HepG2 (cell line): ENCODE measurements at regions of chr7 and their contacts with region 1.

Region 1: DNA sequence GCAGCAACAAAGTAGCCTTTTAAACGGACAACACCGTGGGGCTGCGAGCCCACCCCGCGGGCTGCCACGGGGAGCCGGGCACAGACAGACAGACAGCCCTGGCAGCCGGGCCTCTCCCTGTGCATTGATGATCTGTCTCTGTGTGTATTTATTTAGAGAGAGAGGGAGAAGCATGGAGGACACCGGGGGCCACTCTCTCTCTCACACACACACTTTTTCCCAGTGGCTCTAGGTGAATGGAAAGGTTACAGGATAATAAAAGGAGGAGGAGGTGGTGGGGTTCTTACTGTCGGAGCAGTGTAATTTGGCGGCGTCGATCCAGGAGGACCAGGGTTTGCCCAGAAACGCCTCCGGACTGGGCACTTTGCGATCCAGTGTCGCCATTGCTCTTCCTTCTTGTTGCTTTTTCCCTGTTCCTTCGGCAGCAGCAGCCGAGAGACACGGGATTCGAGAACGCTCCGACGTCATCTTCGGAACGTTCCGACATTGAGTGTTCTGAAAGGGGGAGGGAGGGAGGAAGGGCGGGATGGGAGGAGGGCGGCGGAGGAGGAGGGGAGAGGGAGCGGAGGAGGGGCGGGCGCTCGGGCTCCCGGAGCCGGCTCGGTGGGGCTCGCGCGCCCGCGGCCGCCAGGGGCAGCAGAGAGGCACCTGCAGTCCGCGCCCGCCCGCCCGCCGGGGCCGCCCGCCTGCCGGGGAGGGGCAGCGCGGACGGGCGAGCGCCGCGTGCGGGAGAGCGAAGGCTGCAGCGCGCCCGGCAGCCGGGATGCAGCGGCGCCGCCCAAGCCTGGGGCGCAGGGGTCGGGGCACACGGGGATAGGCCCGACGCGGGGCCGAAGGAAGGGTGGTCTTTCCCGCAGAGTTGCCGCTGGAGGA is at the start of gene ATXN7L1:
- DNase-seq: peak; percentile 92
- ATAC-seq: peak; percentile 89
- H3K4me3 ChIP-seq: peak within 1 kb of the TSS; percentile 77 to 90 (median 88)
- H3K27ac ChIP-seq: peak within 1 kb of the TSS; percentile 85
- H3K4me1 ChIP-seq: peaks cover 51% of the 10 kb centered on the region
- H3K27me3 ChIP-seq: no peaks in the 10 kb centered on the region; a peak in 1 of 5 replicates
- CTCF ChIP-seq: peak; percentile 43; the same call in 1 of the 2 replicates
- EP300 ChIP-seq: no peak
- POLR2A ChIP-seq: peak; percentile 69 to 70
- RAD21 ChIP-seq: peak; percentile 71; the same call in 1 of the 2 replicates
- total RNA-seq, gene ATXN7L1: 7.7 and 7.8 TPM in 2 replicates

Region 2: GRCh38 chr7:105652359-105652993 is 223.9 kb before region 1 on chr7:
- CTCF ChIA-PET with region 1: no interaction called
- POLR2A ChIA-PET with region 1: interaction called, 3 read pairs
- in situ Hi-C with region 1: no loop called
- intact Hi-C with region 1: loop called (anchors 2 kb)
- DNase-seq: peak; percentile 62
- ATAC-seq: peak; percentile 96
- H3K4me3 ChIP-seq: no peak overlapping the region
- H3K27ac ChIP-seq: no peak overlapping the region
- H3K4me1 ChIP-seq: peaks cover 46% of the 10 kb centered on the region
- H3K27me3 ChIP-seq: no peaks in the 10 kb centered on the region
- CTCF ChIP-seq: peak; percentile 94
- EP300 ChIP-seq: no peak
- POLR2A ChIP-seq: no peak
- RAD21 ChIP-seq: peak; percentile 90

Region 3: DNA sequence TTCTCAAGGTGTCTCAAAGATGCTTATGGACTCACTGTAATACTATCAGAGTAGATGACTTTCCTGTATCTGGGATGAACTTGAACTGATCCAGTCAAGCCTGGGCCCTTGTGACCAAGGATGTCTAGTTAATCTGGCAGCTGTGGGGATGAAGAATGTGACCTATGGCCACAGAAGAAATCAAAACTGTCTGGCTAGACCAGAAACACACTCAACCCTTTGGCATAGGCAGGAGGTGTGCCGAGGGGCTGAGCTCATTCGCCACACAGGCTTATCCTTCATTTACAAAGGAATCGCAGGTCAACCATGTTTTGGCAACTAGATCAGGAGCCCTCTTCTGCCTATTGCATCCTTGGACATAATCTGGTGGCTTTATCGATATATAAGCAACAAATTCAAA is 110.5 kb before region 1 on chr7:
- CTCF ChIA-PET with region 1: no interaction called
- POLR2A ChIA-PET with region 1: no interaction called
- in situ Hi-C with region 1: loop called (anchors 5 kb)
- intact Hi-C with region 1: loop called (anchors 2 kb)
- DNase-seq: no peak
- ATAC-seq: no peak
- H3K4me3 ChIP-seq: no peak overlapping the region
- H3K27ac ChIP-seq: no peak overlapping the region
- H3K4me1 ChIP-seq: peaks cover 7% of the 10 kb centered on the region; the same call in 1 of the 2 replicates
- H3K27me3 ChIP-seq: no peaks in the 10 kb centered on the region
- CTCF ChIP-seq: no peak
- EP300 ChIP-seq: no peak
- POLR2A ChIP-seq: no peak
- RAD21 ChIP-seq: no peak

Region 4: DNA sequence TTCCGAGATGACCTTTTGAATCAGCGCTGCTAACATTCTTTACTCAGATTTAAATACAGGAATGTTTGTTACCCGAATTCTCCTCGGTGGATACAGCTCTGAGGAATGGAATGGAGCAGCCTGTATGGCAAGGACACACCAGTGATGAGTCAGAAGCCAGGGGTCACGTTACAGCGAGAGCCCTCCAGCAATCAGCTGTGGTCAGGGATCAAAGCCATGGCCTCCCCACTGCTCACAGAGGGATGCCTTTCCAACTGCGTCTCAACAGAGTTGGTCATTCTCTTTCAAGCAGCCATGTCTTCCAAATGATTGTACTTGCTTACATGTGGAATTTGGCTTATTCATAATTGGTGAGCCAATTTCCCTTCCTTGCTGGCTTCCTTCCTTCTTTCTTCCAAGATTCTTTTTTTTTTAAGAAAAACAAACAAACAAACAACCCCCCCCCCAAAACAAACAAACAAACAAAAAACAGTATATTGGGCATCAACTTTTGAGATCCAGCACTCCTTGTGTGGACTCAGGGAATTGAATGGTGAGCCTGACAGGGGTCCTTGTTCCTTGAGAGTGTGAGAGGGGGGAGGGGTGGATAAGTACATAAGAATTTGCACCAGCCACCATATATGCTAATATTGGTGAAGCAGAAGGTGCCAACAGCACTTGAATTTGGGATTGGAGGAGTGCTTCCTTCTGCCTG is 100.1 kb before region 1 on chr7:
- CTCF ChIA-PET with region 1: no interaction called
- POLR2A ChIA-PET with region 1: no interaction called
- in situ Hi-C with region 1: no loop called
- intact Hi-C with region 1: loop called (anchors 1 kb)
- DNase-seq: peak; percentile 90
- ATAC-seq: peak; percentile 100
- H3K4me3 ChIP-seq: no peak overlapping the region
- H3K27ac ChIP-seq: no peak overlapping the region
- H3K4me1 ChIP-seq: peaks cover 14% of the 10 kb centered on the region
- H3K27me3 ChIP-seq: no peaks in the 10 kb centered on the region
- CTCF ChIP-seq: no peak
- EP300 ChIP-seq: peak in 1 of 2 experiments; percentile 38; a peak in 1 of 4 replicates
- POLR2A ChIP-seq: no peak
- RAD21 ChIP-seq: no peak

Region 5: GRCh38 chr7:105853931-105854419 is 22.4 kb before region 1 on chr7:
- CTCF ChIA-PET with region 1: no interaction called
- POLR2A ChIA-PET with region 1: no interaction called
- in situ Hi-C with region 1: no loop called
- intact Hi-C with region 1: no loop called
- DNase-seq: no peak
- ATAC-seq: no peak
- H3K4me3 ChIP-seq: no peak overlapping the region
- H3K27ac ChIP-seq: no peak overlapping the region
- H3K4me1 ChIP-seq: peaks cover 39% of the 10 kb centered on the region
- H3K27me3 ChIP-seq: no peaks in the 10 kb centered on the region
- CTCF ChIP-seq: no peak
- EP300 ChIP-seq: no peak
- POLR2A ChIP-seq: no peak
- RAD21 ChIP-seq: no peak

Region 6: DNA sequence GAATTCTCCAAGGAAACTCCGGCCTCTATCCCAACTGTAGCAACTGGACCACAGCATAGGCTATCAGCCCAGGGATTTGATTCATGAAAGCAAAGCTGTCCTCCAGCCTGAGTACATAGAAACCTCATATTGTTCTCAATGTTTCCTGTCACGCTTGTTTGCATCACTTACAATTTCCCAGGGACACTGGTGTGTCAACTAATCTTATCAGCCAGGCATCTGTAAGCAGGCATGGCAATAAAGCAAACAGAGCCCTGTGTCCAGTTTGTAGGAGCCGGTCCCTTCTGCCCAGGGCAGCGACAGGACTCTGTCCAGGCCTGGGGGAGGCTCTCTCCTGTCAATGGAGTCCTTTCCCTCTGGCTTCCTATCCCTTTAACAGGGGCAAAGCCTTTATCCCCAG is 63.8 kb after region 1 on chr7:
- CTCF ChIA-PET with region 1: no interaction called
- POLR2A ChIA-PET with region 1: no interaction called
- in situ Hi-C with region 1: no loop called
- intact Hi-C with region 1: loop called (anchors 5 kb)
- DNase-seq: peak; percentile 81
- ATAC-seq: peak; percentile 93
- H3K4me3 ChIP-seq: no peak overlapping the region
- H3K27ac ChIP-seq: no peak overlapping the region
- H3K4me1 ChIP-seq: peaks cover 20% of the 10 kb centered on the region
- H3K27me3 ChIP-seq: no peaks in the 10 kb centered on the region
- CTCF ChIP-seq: no peak
- EP300 ChIP-seq: no peak
- POLR2A ChIP-seq: no peak
- RAD21 ChIP-seq: no peak

Region 7: DNA sequence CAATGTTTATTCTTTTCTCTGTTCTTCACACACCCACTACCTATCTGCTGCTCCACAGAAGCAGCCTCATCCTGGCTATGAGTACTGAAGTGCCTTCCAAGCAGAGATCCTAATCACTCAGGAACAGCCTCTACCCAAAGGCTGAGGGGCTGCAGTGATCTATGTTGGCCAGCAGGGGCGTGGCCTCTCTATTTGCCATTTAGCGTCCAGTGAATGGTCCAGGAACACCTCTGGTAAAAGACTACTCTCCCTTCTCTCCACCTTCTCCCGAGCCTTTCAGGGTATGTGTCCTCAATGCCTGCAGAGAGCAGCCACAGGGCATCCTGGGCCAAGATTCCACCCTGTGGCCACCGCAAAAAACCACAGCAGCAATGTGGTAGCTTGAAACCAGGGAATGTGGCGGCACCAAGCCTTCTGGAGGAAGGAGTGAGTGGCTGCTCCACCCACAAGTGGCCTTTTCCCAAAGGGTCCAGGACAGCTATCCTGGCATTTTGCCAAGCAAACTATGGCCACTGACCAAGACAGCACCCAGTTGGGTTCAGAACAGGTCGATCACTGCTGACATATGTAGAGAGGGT is 164.9 kb after region 1 on chr7:
- CTCF ChIA-PET with region 1: no interaction called
- POLR2A ChIA-PET with region 1: no interaction called
- in situ Hi-C with region 1: no loop called
- intact Hi-C with region 1: loop called (anchors 2 kb)
- DNase-seq: peak; percentile 50
- ATAC-seq: peak; percentile 79
- H3K4me3 ChIP-seq: no peak overlapping the region
- H3K27ac ChIP-seq: no peak overlapping the region
- H3K4me1 ChIP-seq: peaks cover 20% of the 10 kb centered on the region
- H3K27me3 ChIP-seq: peaks cover 0 to 12% of the 10 kb centered on the region in 2 experiments; a peak in 1 of 5 replicates
- CTCF ChIP-seq: peak; percentile 70
- EP300 ChIP-seq: no peak
- POLR2A ChIP-seq: no peak
- RAD21 ChIP-seq: no peak